ENCODE measurements at regions of chr2 and their contacts with region 1.

Region 1: DNA sequence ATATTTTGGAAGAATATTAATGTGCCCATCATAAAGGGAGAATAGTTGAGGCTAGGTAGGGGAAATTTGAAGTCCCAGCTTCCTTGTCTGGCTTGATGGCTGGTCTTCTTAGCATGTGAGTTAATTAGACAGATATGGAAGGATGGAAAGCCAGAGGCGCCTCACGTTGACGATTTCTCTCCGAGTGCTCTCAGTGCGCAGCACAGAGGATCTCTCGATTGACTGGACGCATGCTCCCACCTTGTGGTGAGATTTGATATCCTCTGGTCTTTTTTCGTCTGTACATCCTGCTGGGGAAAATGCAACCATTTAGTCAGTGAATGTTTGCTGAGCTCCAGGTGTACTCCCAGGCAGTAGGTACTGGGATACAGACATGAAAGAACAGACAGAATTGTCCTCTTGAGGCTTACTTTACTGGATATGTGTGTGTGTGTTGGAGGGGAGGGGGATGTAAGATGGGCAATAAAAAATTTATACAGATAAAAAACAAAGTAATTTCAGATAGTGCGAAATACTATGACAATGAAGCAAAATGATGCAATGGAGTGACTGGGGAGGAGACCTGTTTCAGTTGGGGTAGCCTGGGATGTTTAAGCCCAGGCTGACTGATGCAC is 66.9 kb upstream of the ZNG1B start:
- DNase-seq: peak; percentile 74
- H3K4me3 ChIP-seq: no peak overlapping the region
- H3K27ac ChIP-seq: no peak overlapping the region
- H3K4me1 ChIP-seq: peaks cover 6% of the 10 kb centered on the region
- H3K27me3 ChIP-seq: no peaks in the 10 kb centered on the region
- CTCF ChIP-seq: peak; percentile 49 to 71

Region 2: GRCh38 chr2:113203901-113204519 is 166.6 kb before region 1 on chr2:
- CTCF ChIA-PET with region 1: interaction called, 6 read pairs
- dilution Hi-C with region 1: no loop called
- in situ Hi-C with region 1: loop called in 1 of 2 experiments (anchors 5 kb)
- intact Hi-C with region 1: loop called (anchors 1 kb)
- DNase-seq: peak; percentile 64
- H3K4me3 ChIP-seq: no peak overlapping the region
- H3K27ac ChIP-seq: no peak overlapping the region
- H3K4me1 ChIP-seq: peaks cover 36% of the 10 kb centered on the region
- H3K27me3 ChIP-seq: no peaks in the 10 kb centered on the region
- CTCF ChIP-seq: peak; percentile 91 to 94

Region 3: GRCh38 chr2:113266431-113266830 is 104.2 kb before region 1 on chr2:
- CTCF ChIA-PET with region 1: no interaction called
- dilution Hi-C with region 1: loop called (anchors 5 kb)
- in situ Hi-C with region 1: loop called in 1 of 2 experiments (anchors 10 kb)
- intact Hi-C with region 1: no loop called
- DNase-seq: no peak
- H3K4me3 ChIP-seq: no peak overlapping the region
- H3K27ac ChIP-seq: no peak overlapping the region
- H3K4me1 ChIP-seq: no peaks in the 10 kb centered on the region
- H3K27me3 ChIP-seq: no peaks in the 10 kb centered on the region
- CTCF ChIP-seq: no peak

Region 4: GRCh38 chr2:113282747-113283533 is 87.6 kb before region 1 on chr2:
- CTCF ChIA-PET with region 1: no interaction called
- dilution Hi-C with region 1: no loop called
- in situ Hi-C with region 1: no loop called
- intact Hi-C with region 1: loop called (anchors 1 kb)
- DNase-seq: peak; percentile 81
- H3K4me3 ChIP-seq: no peak overlapping the region
- H3K27ac ChIP-seq: peak overlapping the region; percentile 99
- H3K4me1 ChIP-seq: peaks cover 47% of the 10 kb centered on the region
- H3K27me3 ChIP-seq: no peaks in the 10 kb centered on the region
- CTCF ChIP-seq: peak; percentile 14 to 47

Region 5: DNA sequence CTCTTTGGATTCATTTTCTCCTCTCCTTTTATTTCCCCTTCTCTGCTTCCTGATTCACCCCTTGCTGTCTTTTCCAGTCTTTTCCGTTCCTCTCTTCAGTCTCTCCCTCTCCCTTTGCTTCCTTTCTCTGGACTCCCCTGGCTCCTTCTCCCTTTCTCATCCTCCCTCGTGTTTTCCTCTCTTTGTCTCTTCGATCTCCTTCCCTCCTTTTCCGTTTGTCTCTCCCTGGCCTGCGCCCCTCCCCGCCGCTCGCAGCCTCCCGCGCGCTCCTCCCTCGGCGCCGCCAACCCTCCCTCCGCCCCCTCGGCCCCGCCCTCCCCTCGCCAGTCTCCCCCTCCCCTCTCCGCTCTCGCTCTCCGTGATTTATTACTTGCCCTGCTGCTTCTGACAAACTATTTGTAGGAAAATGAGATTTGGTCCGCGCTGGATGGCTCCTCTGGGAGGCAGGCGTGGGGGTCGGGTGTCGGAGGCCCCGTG is 45.9 kb before region 1 on chr2:
- CTCF ChIA-PET with region 1: no interaction called
- dilution Hi-C with region 1: no loop called
- in situ Hi-C with region 1: no loop called
- intact Hi-C with region 1: loop called (anchors 5 kb)
- DNase-seq: peak; percentile 65
- H3K4me3 ChIP-seq: peak overlapping the region; percentile 56 to 86 (median 67)
- H3K27ac ChIP-seq: peak overlapping the region; percentile 86
- H3K4me1 ChIP-seq: peaks cover 45% of the 10 kb centered on the region
- H3K27me3 ChIP-seq: no peaks in the 10 kb centered on the region
- CTCF ChIP-seq: no peak

Measured in mammary epithelial cell (primary cell).